MCF 10A (cell line): ENCODE measurements at regions of chr4 and their contacts with region 1.

Region 1: GRCh38 chr4:165684177-165684805 is 188.7 kb upstream of the TLL1 start:
- DNase-seq: peak; percentile 94
- H3K4me3 Mint-ChIP-seq: peak overlapping the region; percentile 70
- H3K27ac Mint-ChIP-seq: peak overlapping the region; percentile 93
- H3K4me1 Mint-ChIP-seq: peaks cover 30% of the 10 kb centered on the region
- H3K27me3 Mint-ChIP-seq: no peaks in the 10 kb centered on the region
- CTCF ChIP-seq: no peak

Region 2: GRCh38 chr4:165512424-165512823 is 171.9 kb before region 1 on chr4:
- CTCF ChIA-PET with region 1: no interaction called
- POLR2A ChIA-PET with region 1: no interaction called
- intact Hi-C with region 1: no loop called
- DNase-seq: no peak
- H3K4me3 Mint-ChIP-seq: no peak overlapping the region
- H3K27ac Mint-ChIP-seq: no peak overlapping the region
- H3K4me1 Mint-ChIP-seq: peaks cover 4% of the 10 kb centered on the region
- H3K27me3 Mint-ChIP-seq: no peaks in the 10 kb centered on the region
- CTCF ChIP-seq: no peak

Region 3: DNA sequence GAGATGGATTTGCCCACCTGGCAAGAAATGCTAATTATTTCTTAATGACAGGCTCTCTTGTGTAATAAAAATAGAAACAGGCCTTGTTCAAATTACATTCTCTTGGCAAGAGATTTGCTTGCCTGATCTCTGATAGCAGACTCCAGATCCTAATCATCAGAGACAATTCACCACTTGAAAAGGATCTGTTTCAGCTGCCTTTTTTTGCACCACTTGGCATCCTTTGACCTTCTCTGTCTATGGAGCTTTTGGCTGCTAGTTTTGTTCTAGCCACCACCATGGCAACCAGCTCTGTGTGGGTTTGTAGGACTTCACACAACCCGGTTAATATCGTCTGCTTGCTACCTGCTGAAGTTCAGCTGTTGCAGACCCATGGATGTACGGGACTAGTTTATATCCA is 52.4 kb before region 1 on chr4:
- CTCF ChIA-PET with region 1: no interaction called
- POLR2A ChIA-PET with region 1: interaction called, 13 read pairs
- intact Hi-C with region 1: no loop called
- DNase-seq: no peak
- H3K4me3 Mint-ChIP-seq: no peak overlapping the region
- H3K27ac Mint-ChIP-seq: peak overlapping the region; percentile 90
- H3K4me1 Mint-ChIP-seq: peaks cover 18% of the 10 kb centered on the region
- H3K27me3 Mint-ChIP-seq: no peaks in the 10 kb centered on the region
- CTCF ChIP-seq: no peak

Region 4: GRCh38 chr4:165668694-165669093 is 15.6 kb before region 1 on chr4:
- CTCF ChIA-PET with region 1: interaction called, 4 read pairs
- POLR2A ChIA-PET with region 1: interaction called, 16 read pairs
- intact Hi-C with region 1: no loop called
- DNase-seq: no peak
- H3K4me3 Mint-ChIP-seq: no peak overlapping the region
- H3K27ac Mint-ChIP-seq: no peak overlapping the region
- H3K4me1 Mint-ChIP-seq: no peaks in the 10 kb centered on the region
- H3K27me3 Mint-ChIP-seq: no peaks in the 10 kb centered on the region
- CTCF ChIP-seq: no peak

Region 5: GRCh38 chr4:165738571-165738970 is 54.3 kb after region 1 on chr4:
- CTCF ChIA-PET with region 1: no interaction called
- POLR2A ChIA-PET with region 1: interaction called, 4 read pairs
- intact Hi-C with region 1: loop called (anchors 2 kb)
- DNase-seq: peak; percentile 60
- H3K4me3 Mint-ChIP-seq: peak overlapping the region; percentile 66
- H3K27ac Mint-ChIP-seq: peak overlapping the region; percentile 93
- H3K4me1 Mint-ChIP-seq: peaks cover 20% of the 10 kb centered on the region
- H3K27me3 Mint-ChIP-seq: no peaks in the 10 kb centered on the region
- CTCF ChIP-seq: no peak